ENCODE measurements at regions of chr13 and their contacts with region 1.

Region 1: GRCh38 chr13:81171065-81171647 is 830.2 kb upstream of the SPRY2 start:
- DNase-seq: no peak
- H3K4me3 Mint-ChIP-seq: no peak overlapping the region
- H3K27ac Mint-ChIP-seq: no peak overlapping the region
- H3K4me1 Mint-ChIP-seq: no peaks in the 10 kb centered on the region
- H3K27me3 Mint-ChIP-seq: no peaks in the 10 kb centered on the region

Region 2: GRCh38 chr13:81148822-81149221 is 22.3 kb before region 1 on chr13:
- CTCF ChIA-PET with region 1: no interaction called
- intact Hi-C with region 1: no loop called
- DNase-seq: no peak
- H3K4me3 Mint-ChIP-seq: no peak overlapping the region
- H3K27ac Mint-ChIP-seq: no peak overlapping the region
- H3K4me1 Mint-ChIP-seq: no peaks in the 10 kb centered on the region
- H3K27me3 Mint-ChIP-seq: no peaks in the 10 kb centered on the region

Region 3: DNA sequence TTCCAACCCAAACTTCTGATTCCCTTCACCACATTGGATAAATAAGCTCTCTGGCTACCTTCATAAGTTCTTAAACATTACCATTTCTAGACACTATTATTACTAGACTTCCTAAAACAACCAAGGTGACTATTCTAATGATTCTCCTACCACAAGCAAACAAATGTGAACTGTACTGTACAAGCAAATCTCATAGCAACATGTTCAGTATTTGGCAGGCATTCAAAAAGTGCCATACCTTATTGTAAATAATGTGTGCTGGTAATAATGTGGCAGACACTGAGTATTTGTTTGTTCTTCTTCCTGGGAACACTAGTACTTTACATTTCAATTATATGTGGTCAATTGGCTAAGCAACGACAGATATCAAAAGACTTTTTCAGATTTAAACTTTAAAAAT is 155.8 kb after region 1 on chr13:
- CTCF ChIA-PET with region 1: no interaction called
- intact Hi-C with region 1: no loop called
- DNase-seq: no peak
- H3K4me3 Mint-ChIP-seq: no peak overlapping the region
- H3K27ac Mint-ChIP-seq: no peak overlapping the region
- H3K4me1 Mint-ChIP-seq: no peaks in the 10 kb centered on the region
- H3K27me3 Mint-ChIP-seq: no peaks in the 10 kb centered on the region

Region 4: GRCh38 chr13:81872581-81872980 is 701.4 kb after region 1 on chr13:
- CTCF ChIA-PET with region 1: interaction called, 5 read pairs
- intact Hi-C with region 1: loop called (anchors 2 kb)
- DNase-seq: no peak
- H3K4me3 Mint-ChIP-seq: no peak overlapping the region
- H3K27ac Mint-ChIP-seq: no peak overlapping the region
- H3K4me1 Mint-ChIP-seq: no peaks in the 10 kb centered on the region
- H3K27me3 Mint-ChIP-seq: no peaks in the 10 kb centered on the region

Region 5: GRCh38 chr13:82330499-82330898 is 1159.3 kb after region 1 on chr13:
- CTCF ChIA-PET with region 1: no interaction called
- intact Hi-C with region 1: loop called (anchors 2 kb)
- DNase-seq: no peak
- H3K4me3 Mint-ChIP-seq: no peak overlapping the region
- H3K27ac Mint-ChIP-seq: no peak overlapping the region
- H3K4me1 Mint-ChIP-seq: no peaks in the 10 kb centered on the region
- H3K27me3 Mint-ChIP-seq: no peaks in the 10 kb centered on the region